ENCODE measurements at regions of chr6 and their contacts with region 1.

Region 1: DNA sequence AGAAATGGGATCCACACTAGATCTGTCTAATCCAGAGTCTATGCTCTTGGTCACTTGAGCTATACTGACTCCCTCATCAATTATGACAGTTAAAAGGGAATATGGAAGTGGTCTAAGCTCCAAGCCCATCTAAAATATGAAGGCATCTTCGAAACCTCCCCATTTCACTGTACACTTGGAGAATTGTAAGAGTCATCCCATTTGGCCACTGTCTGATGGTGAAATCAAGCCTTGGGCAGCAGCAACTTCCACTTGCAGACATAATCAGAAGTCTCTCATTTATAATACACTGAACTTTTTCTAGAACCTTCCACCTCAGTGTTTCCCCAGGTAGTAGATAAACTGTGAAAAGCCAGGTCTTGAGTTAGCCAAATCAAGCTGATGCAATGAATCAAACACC is 26.3 kb upstream of the UBR2 start:
- DNase-seq: no peak

Region 2: GRCh38 chr6:42440778-42441696 is 96.5 kb before region 1 on chr6:
- in situ Hi-C with region 1: loop called (anchors 5 kb)
- DNase-seq: no peak

Region 3: GRCh38 chr6:42599558-42599957 is 62.0 kb after region 1 on chr6:
- in situ Hi-C with region 1: no loop called
- DNase-seq: no peak

Region 4: DNA sequence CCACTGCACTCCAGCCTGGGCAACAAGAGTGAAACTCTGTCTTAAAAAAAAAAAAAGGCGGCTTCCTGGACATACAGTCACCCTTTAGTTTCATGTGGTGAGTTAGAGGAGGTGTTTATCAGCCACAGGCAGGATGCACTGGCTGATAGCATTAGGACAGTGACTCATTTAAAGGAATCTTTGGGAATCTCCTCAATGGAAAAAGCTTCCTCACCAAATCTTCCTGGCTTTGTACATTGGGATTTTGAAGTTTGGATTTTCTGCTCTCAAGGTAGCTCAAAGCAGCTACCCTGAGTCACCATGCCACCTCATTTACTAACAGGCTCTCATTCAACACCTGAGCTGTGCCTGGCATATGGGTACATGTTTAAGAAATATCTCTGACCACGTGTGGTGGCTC is 164.7 kb after region 1 on chr6:
- in situ Hi-C with region 1: no loop called
- DNase-seq: no peak

Region 5: DNA sequence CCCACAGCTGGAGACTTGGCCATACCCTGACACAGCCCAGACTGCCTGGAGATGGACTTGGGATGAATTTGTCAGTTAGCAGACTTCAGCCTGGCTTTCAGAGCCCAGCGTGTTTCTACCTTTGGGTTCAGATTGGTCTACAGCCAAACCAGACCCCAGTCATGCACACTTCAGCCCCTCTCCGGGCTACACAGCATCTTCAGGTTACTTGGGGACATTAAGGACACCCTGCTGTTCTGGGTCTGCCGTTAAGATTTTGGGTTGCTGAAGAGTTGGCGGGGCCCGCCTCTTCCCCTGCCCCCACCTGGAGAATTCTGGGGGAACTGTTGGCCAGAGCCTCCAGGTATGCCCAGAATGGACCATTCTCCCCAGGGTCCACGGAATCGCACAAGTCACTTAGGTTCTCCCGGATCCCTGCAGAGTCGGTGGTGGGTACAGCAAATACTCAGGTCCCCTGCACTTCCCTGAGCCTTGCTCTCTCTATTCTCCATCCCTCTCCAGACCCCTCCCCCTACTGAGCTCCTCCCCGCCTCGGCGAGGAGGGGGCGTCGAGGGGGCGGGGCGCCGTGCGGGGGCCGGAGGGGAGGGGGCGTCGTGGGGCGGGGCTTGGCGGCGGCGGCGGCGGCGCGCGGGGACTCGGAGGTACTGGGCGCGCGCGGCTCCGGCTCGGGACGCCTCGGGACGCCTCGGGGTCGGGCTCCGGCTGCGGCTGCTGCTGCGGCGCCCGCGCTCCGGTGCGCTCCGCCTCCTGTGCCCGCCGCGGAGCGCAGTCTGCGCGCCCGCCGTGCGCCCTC is 538.3 kb after region 1 on chr6 and contains the start of gene PTK7:
- in situ Hi-C with region 1: no loop called
- DNase-seq: peak; percentile 55
- total RNA-seq, gene PTK7: 237 and 257 TPM in 2 replicates

Measured in G401 (cell line).